ENCODE measurements at regions of chr6 and their contacts with region 1.

Region 1: GRCh38 chr6:150813319-150813992 is 52.0 kb upstream of the MTHFD1L start:
- DNase-seq: no peak
- H3K4me3 ChIP-seq: no peak overlapping the region
- H3K27ac ChIP-seq: no peak overlapping the region
- H3K4me1 ChIP-seq: peaks cover 0 to 9% (median 4%) of the 10 kb centered on the region in 4 donors
- H3K27me3 ChIP-seq: no peaks in the 10 kb centered on the region
- CTCF ChIP-seq: no peak

Region 2: DNA sequence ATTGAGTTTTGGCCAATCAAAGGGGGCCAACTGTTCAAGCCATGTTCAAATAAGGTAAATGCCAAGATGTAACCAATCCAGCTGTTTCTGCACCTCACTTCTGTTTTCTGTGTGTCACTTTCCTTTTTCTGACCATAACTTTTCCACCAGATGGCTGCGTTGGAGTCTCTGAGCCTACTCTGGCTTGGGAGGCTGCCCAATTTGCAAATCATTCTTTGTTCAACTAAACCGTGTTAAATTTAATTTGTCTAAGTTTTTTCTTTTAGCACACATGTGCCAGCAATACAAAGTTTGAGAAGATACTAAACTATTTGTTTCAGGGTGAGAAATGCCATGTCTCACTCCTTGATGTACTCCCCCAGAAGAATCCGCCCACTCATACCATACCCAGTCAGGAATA is 392.5 kb before region 1 on chr6:
- intact Hi-C with region 1: loop called (anchors 5 kb)
- DNase-seq: no peak
- H3K4me3 ChIP-seq: no peak overlapping the region
- H3K27ac ChIP-seq: no peak overlapping the region
- H3K4me1 ChIP-seq: peaks cover 0 to 9% (median 0%) of the 10 kb centered on the region in 4 donors
- H3K27me3 ChIP-seq: peaks cover 0 to 2% of the 10 kb centered on the region in 2 donors
- CTCF ChIP-seq: no peak

Region 3: GRCh38 chr6:150876598-150876997 is 63.1 kb after region 1 on chr6:
- intact Hi-C with region 1: loop called (anchors 10 kb)
- DNase-seq: peak; percentile 61 to 91
- H3K4me3 ChIP-seq: no peak overlapping the region
- H3K27ac ChIP-seq: peak overlapping the region; percentile 60 to 82
- H3K4me1 ChIP-seq: peaks cover 0 to 47% (median 12%) of the 10 kb centered on the region in 4 donors
- H3K27me3 ChIP-seq: no peaks in the 10 kb centered on the region
- CTCF ChIP-seq: peak; percentile 42 to 43